AG04449 (cell line): ENCODE measurements at regions of chr2 and their contacts with region 1.

Region 1: GRCh38 chr2:241081643-241082340 is 20.3 kb downstream of the MTERF4 start:
- DNase-seq: no peak
- H3K4me3 ChIP-seq: no peak overlapping the region
- CTCF ChIP-seq: no peak

Region 2: DNA sequence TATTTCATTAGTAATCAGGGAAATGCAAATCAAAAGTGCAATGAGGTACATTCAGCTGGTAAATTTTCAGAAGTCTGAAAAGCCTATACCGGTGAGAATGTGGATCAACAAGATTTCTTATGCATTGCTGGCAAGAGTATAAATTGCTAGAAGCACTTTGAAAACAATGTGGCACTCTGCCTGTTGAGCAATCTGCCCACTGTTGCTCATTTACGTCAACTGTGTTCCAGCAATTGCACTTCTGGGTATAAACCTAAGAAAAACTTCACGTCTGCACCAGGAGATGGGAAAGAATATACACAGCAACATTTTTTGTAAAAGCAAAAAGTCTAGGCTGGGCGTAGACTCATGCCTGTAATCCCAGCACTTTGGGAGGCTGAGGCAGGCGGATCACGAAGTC is 20.5 kb before region 1 on chr2:
- CTCF ChIA-PET with region 1: interaction called, 21 read pairs
- POLR2A ChIA-PET with region 1: no interaction called
- DNase-seq: no peak
- H3K4me3 ChIP-seq: no peak overlapping the region
- CTCF ChIP-seq: no peak

Region 3: DNA sequence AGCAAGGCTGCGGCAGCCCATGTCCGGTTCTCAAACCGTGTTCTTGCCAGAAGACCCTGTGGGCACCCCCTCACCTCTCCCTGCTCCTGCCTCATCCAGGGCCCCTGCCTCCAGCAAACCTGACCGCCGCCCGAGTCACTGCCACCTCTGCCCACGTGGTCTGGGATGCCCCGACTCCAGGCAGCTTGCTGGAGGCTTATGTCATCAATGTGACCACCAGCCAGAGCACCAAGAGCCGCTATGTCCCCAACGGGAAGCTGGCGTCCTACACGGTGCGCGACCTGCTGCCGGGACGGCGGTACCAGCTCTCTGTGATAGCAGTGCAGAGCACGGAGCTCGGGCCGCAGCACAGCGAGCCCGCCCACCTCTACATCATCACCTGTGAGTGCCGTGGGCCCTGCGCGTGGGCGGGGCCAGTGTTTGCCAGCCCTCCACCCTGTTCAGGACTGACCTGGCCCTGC is 11.9 kb before region 1 on chr2:
- CTCF ChIA-PET with region 1: interaction called, 14 read pairs
- POLR2A ChIA-PET with region 1: no interaction called
- DNase-seq: no peak
- H3K4me3 ChIP-seq: no peak overlapping the region
- CTCF ChIP-seq: no peak

Region 4: GRCh38 chr2:241092677-241093076 is 10.9 kb after region 1 on chr2:
- CTCF ChIA-PET with region 1: interaction called, 41 read pairs
- POLR2A ChIA-PET with region 1: no interaction called
- DNase-seq: no peak
- H3K4me3 ChIP-seq: no peak overlapping the region
- CTCF ChIP-seq: no peak